Activated CD4-positive, alpha-beta memory T cell treated with anti-CD3 and anti-CD28 coated beads for 36 hours (primary cell): ENCODE measurements at regions of chr4 and their contacts with region 1.

Region 1: DNA sequence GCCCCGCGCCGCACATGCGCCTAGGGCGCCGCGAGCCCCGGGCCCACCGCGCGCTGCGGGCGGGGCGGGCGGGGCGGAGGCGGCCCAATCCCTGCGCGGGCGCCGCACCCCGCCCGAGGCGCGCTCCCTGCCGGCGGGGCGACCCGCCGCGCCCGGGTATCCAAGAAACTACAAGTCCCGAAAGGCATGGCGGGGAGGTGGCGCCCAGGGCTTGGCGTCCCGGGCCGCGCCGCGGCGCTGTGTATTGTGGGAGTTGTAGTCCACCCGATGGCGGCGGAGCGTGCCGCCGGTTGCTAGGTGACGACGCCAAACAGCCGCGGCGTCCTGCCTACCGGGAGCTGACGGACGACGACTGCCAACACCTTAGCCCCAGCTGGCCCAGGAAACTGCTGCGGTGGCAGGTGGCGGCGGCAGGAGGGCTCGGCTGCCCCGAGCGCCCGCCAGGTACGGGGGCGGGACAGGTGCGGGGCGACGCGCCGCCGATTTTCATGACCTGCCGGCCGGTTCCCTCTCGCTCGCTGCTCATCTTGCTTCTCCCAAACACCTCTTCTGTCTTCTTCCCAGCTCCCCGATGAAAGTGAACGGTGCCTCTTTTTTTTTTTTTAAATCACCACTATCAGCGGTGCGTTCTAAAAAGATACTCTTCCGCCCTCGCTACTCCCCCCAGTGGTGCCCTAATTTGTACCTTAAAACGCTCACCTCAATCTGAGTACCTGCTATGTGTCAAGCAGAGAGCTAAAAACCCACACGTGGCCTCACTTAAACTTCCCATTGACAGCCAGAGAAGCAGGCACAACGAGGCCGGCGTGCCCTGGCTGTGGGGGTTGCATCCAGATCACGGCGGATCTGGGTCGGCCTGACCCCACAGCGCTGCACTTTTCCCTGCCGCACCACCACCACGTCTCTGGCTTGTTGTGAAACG is at the start of gene CFAP99:
- DNase-seq: peak; percentile 99
- H3K4me3 Mint-ChIP-seq: peak within 1 kb of the TSS; percentile 89
- H3K27ac Mint-ChIP-seq: peak within 1 kb of the TSS; percentile 74
- H3K4me1 Mint-ChIP-seq: peaks cover 33% of the 10 kb centered on the region
- H3K27me3 Mint-ChIP-seq: peaks cover 13% of the 10 kb centered on the region
- total RNA-seq, gene CFAP99: not detected

Region 2: GRCh38 chr4:2008875-2009703 is 409.8 kb before region 1 on chr4 and contains the start of gene NELFA:
- CTCF ChIA-PET with region 1: no interaction called
- POLR2A ChIA-PET with region 1: no interaction called
- intact Hi-C with region 1: loop called (anchors 10 kb)
- DNase-seq: peak; percentile 96
- H3K4me3 Mint-ChIP-seq: peak within 1 kb of the TSS; percentile 88
- H3K27ac Mint-ChIP-seq: peak within 1 kb of the TSS; percentile 87
- H3K4me1 Mint-ChIP-seq: peaks cover 29% of the 10 kb centered on the region
- H3K27me3 Mint-ChIP-seq: no peaks in the 10 kb centered on the region
- total RNA-seq, gene NELFA: 39.5 to 41.5 TPM

Region 3: DNA sequence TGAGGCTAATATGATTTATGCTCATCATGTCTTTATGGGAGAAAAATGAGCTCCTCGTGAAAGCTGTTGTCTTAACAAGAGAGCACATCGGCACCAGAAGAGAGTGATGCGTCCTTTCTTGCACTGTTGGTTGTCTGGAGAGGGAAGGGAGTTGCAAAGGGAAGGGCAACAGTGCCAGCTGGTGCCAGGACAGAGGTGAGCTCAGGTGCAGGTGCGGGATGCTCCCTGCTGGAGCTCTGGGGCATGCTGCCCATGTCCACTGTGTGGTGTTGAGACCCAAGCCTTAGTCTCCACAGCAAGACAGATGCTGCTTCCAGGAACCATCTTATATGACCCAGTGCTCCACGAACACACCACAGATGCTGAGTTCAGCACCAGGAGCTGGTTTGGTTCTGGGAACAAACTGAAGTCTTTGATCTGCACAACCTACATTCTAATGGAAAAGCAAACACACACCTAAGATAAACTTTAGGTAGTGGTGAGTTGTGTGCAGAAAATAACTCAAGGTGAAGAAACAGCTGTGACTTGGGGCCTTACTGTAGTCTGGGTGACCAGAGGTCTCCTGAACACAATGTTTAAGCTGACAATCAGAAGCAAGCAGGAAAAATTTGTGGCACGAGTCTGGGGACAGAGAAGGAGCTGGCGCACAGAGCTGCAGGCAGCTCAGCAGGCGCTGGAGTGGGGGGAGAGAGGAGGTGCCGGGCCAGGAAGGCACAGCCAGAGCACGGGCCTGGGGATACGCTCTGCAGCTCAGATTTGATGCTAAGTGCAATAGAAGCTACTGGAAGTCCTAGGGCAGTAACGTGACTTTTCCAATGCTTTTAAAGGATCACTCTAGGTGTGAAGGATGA is 250.2 kb before region 1 on chr4:
- CTCF ChIA-PET with region 1: no interaction called
- POLR2A ChIA-PET with region 1: no interaction called
- intact Hi-C with region 1: no loop called
- DNase-seq: no peak
- H3K4me3 Mint-ChIP-seq: no peak overlapping the region
- H3K27ac Mint-ChIP-seq: no peak overlapping the region
- H3K4me1 Mint-ChIP-seq: peaks cover 17% of the 10 kb centered on the region
- H3K27me3 Mint-ChIP-seq: no peaks in the 10 kb centered on the region

Region 4: DNA sequence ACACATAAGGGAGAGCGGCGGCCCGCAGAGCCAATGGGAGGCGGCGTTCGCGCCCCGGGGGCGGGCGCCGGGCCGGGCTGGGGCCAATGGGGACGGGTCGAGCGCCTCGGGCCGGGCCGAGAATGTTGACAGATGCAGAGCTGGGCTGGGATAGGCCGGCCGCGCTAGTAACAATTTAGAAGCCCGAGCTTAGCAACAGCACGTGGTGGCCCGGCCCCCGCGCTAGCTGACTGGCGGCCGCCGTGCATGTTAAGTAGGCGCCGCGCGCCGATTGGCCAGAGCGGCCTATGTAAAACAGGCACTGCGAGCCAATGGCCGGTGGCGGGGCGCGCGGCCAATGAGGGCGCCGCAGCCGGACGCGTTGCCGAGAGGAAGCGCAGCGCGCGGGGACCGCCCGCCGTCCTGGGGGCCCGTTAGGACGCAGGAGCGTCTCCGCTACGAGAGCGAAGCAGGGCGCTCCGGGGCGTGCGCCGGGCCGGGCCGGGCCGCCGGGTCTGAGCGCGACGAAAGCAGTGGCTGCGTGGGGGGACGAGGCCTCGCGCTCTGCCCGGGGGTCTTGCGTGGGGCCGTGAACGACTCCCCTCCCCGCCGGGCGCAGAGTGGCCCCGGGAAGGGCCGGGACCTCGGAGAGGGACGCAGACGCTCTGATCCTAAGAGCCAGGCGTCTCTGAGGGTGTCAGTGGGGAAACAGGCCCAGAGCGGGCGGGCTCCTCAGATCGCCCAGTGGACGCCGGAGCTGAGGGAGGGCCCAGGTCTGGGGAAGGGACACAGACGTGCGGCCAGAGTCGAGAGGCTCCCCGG is 156.6 kb before region 1 on chr4:
- CTCF ChIA-PET with region 1: interaction called, 3 read pairs
- POLR2A ChIA-PET with region 1: interaction called, 12 read pairs
- intact Hi-C with region 1: loop called (anchors 1 kb)
- DNase-seq: peak; percentile 99
- H3K4me3 Mint-ChIP-seq: peak overlapping the region; percentile 62
- H3K27ac Mint-ChIP-seq: peak overlapping the region; percentile 54
- H3K4me1 Mint-ChIP-seq: peaks cover 3% of the 10 kb centered on the region
- H3K27me3 Mint-ChIP-seq: no peaks in the 10 kb centered on the region

Region 5: DNA sequence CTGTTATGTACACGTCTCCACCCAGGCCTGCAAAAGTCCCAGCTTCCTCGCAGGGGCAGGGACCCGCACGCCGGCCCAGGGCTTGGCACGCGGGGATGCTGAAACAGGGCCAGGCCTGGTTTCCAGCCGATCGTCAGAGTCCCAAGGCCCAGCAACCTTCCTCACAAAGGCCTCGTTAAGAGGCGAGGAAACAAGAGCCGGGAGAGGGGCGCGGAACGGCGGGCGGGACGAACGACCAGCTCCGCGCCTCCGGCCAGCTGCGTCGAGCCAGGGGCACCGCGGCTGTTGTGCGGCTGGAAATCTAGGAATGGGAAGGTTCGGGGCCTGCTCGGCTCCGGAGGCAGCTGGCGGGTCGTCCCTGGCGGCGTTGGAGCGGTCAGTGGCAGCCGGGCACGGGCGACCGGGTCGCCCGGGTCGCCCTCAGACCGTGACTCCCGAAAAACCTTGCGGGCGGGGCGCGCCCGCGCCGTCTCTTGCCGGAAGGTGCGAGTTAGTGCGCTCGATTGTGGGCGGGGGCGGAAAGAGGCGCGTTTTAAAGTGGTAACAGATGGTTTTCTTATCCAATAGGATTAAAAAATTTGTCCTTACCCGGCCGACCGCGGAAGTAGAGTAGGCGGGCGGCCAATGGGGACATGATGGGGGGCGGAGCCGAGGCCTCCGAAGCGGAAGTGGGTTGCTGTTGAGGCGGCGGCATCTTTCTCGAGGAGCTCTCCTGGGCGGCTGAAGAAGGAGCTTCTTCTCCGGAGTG is 49.7 kb after region 1 on chr4 and contains the start of gene RNF4:
- CTCF ChIA-PET with region 1: interaction called, 3 read pairs
- POLR2A ChIA-PET with region 1: interaction called, 7 read pairs
- intact Hi-C with region 1: loop called (anchors 1 kb)
- DNase-seq: peak; percentile 98
- H3K4me3 Mint-ChIP-seq: peak within 1 kb of the TSS; percentile 97
- H3K27ac Mint-ChIP-seq: peak within 1 kb of the TSS; percentile 98
- H3K4me1 Mint-ChIP-seq: peaks cover 42% of the 10 kb centered on the region
- H3K27me3 Mint-ChIP-seq: no peaks in the 10 kb centered on the region
- total RNA-seq, gene RNF4: 84.6 to 90.3 TPM